ENCODE measurements at regions of chr21 and their contacts with region 1.

Region 1: DNA sequence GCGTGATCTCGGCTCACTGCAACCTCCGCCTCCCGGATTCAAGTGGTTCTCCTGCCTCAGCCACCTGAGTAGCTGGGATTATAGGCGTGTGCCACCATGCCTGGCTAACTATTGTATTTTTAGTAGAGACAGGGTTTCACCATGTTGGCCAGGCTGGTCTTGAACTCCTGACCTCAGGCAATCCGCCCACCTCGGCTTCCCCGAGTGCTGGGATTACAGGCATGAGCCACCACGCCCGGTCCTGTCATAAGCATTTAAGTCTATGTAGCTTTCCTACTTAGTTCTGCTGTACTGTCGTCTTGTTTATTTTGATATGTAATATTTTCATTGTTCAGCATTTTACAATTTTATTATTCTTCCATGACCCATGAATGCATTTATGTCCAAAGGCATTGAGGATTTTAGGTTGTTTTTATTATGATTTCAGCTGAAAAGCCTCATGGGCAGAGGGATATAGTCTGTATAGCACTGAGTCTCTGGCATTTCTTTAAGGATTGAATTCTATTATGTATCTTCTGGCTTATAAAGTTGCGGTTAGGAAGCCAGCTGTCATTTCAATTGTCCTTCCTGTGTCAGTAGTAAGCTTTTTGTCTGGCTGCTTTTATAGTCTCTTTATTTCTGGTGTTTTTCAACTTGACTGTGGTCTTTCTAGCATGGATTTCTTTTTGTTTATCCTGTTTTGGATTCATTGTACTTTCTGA is 9.2 kb downstream of the AGPAT3 start:
- DNase-seq: no peak
- H3K4me3 ChIP-seq: no peak overlapping the region
- H3K27ac ChIP-seq: no peak overlapping the region
- H3K4me1 ChIP-seq: peaks cover 0 to 34% (median 11%) of the 10 kb centered on the region in 4 donors
- H3K27me3 ChIP-seq: no peaks in the 10 kb centered on the region
- CTCF ChIP-seq: no peak
- EP300 ChIP-seq: no peak
- POLR2A ChIP-seq: no peak

Region 2: DNA sequence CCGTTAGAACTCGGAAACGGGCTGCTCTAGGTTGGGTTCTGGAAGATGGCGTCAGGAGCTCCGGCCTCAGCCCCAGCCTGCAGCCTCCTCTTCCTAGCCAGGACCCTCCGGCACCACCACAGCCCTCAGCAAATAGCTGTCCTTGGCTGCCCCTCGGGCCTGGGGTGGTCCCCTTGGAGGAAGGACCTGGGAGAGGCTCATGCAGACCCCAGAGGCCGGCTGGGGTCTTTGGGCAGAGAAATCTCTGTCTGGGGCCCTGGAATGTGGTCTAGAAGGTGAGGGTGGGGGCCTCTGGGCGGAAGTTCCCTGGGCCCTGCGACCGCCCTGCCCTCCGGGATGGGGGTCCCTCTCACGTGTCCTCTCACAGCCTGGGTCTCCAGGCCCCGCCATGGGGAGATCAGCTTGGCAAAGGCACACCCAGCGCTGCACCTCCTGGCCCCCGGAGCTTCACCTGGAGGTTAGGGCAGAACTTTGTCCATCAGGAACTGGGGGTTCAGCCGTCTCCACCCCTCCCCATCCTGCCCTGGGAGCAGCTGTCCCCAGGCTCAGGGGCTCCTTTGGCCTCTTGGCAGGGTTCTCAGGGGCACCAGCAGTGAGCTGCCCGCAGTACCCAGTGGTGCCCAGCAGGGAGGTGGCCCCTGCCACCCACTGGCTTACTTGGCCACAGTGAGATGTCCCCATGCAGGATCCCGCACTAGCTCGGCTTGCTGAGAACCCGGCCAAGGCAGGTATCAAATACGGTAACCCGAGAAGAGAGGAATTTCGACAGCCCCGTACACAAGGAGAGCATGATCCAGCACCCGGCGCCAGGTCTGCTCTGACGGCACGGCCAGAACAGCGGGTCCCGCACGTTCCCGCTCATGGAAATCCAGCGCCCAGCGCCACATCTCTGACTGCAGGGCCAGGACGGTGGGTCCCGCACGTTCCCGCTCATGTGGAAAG is 48.3 kb before region 1 on chr21:
- intact Hi-C with region 1: loop called (anchors 10 kb)
- DNase-seq: peak; percentile 42 to 47
- H3K4me3 ChIP-seq: peak overlapping the region in 1 of 4 donors; percentile 15
- H3K27ac ChIP-seq: no peak overlapping the region
- H3K4me1 ChIP-seq: peaks cover 6 to 11% (median 8%) of the 10 kb centered on the region in 4 donors
- H3K27me3 ChIP-seq: peaks cover 0 to 39% (median 5%) of the 10 kb centered on the region in 3 donors
- CTCF ChIP-seq: peak in 1 of 7 experiments; percentile 17
- EP300 ChIP-seq: no peak
- POLR2A ChIP-seq: no peak

Measured in stomach (tissue), 19 donors.